IMR-90 (cell line): ENCODE measurements at regions of chr3 and their contacts with region 1.

Region 1: GRCh38 chr3:73955494-73956070 is 330.8 kb upstream of the PDZRN3 start:
- DNase-seq: no peak
- ATAC-seq: no peak
- H3K4me3 ChIP-seq: no peak overlapping the region
- H3K27ac ChIP-seq: no peak overlapping the region
- H3K4me1 ChIP-seq: no peaks in the 10 kb centered on the region
- H3K27me3 ChIP-seq: no peaks in the 10 kb centered on the region; the same call in 1 of the 2 replicates
- CTCF ChIP-seq: no peak
- POLR2A ChIP-seq: no peak
- RAD21 ChIP-seq: no peak

Region 2: GRCh38 chr3:72496051-72496670 is 1459.4 kb before region 1 on chr3:
- CTCF ChIA-PET with region 1: no interaction called
- POLR2A ChIA-PET with region 1: no interaction called
- dilution Hi-C with region 1: no loop called
- in situ Hi-C with region 1: no loop called
- intact Hi-C with region 1: no loop called
- DNase-seq: no peak
- ATAC-seq: no peak
- H3K4me3 ChIP-seq: no peak overlapping the region
- H3K27ac ChIP-seq: no peak overlapping the region
- H3K4me1 ChIP-seq: peaks cover 6% of the 10 kb centered on the region
- H3K27me3 ChIP-seq: peaks cover 8% of the 10 kb centered on the region
- CTCF ChIP-seq: no peak
- POLR2A ChIP-seq: no peak
- RAD21 ChIP-seq: no peak

Region 3: GRCh38 chr3:73745526-73746191 is 209.9 kb before region 1 on chr3:
- CTCF ChIA-PET with region 1: no interaction called
- POLR2A ChIA-PET with region 1: no interaction called
- dilution Hi-C with region 1: no loop called
- in situ Hi-C with region 1: no loop called
- intact Hi-C with region 1: no loop called
- DNase-seq: peak; percentile 33
- ATAC-seq: no peak
- H3K4me3 ChIP-seq: no peak overlapping the region
- H3K27ac ChIP-seq: no peak overlapping the region
- H3K4me1 ChIP-seq: no peaks in the 10 kb centered on the region
- H3K27me3 ChIP-seq: no peaks in the 10 kb centered on the region
- CTCF ChIP-seq: no peak
- POLR2A ChIP-seq: no peak
- RAD21 ChIP-seq: no peak

Region 4: GRCh38 chr3:73915886-73916285 is 39.7 kb before region 1 on chr3:
- CTCF ChIA-PET with region 1: no interaction called
- POLR2A ChIA-PET with region 1: no interaction called
- dilution Hi-C with region 1: no loop called
- in situ Hi-C with region 1: no loop called
- intact Hi-C with region 1: loop called (anchors 1 kb)
- DNase-seq: no peak
- ATAC-seq: no peak
- H3K4me3 ChIP-seq: no peak overlapping the region
- H3K27ac ChIP-seq: no peak overlapping the region
- H3K4me1 ChIP-seq: no peaks in the 10 kb centered on the region
- H3K27me3 ChIP-seq: no peaks in the 10 kb centered on the region
- CTCF ChIP-seq: no peak
- POLR2A ChIP-seq: no peak
- RAD21 ChIP-seq: no peak